AG04450 (cell line): ENCODE measurements at regions of chr6 and their contacts with region 1.

Region 1: DNA sequence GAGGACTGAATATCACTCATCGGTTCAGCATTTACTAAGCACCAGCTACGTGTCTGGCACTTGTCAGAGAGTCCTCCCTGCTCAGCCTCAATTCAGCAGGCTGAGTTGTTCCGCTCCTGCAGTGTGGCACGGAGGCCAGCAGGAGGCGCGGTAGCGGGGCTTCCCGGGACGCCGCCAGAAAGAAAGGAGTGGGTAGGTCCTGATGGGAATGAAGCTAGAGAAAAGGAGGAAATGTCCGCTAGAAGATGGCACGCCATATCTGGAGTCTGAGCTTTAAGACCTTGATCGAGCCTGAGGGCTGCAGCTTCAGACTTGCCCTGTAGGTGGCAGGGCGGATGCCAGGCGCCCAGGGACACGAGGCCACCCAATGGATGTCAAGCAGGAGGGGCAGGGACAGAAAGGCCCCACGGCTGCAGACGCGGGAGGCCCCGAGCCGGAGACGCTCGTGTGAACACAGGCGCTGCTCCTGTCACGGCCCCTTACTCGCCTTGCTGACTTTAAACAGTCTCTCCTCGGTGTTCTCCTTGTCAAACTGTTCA is 18.7 kb downstream of the SERPINB6 start:
- DNase-seq: peak; percentile 75
- H3K4me3 ChIP-seq: 0 out of 2 replicates have a peak overlapping the region, but pooled peaks have one; percentile 11
- H3K27ac ChIP-seq: peak overlapping the region; percentile 65
- H3K27me3 ChIP-seq: no peaks in the 10 kb centered on the region
- CTCF ChIP-seq: peak; percentile 99

Region 2: GRCh38 chr6:2296781-2297180 is 655.8 kb before region 1 on chr6:
- CTCF ChIA-PET with region 1: no interaction called
- POLR2A ChIA-PET with region 1: no interaction called
- DNase-seq: no peak
- H3K4me3 ChIP-seq: no peak overlapping the region
- H3K27ac ChIP-seq: no peak overlapping the region
- H3K27me3 ChIP-seq: no peaks in the 10 kb centered on the region
- CTCF ChIP-seq: no peak

Region 3: DNA sequence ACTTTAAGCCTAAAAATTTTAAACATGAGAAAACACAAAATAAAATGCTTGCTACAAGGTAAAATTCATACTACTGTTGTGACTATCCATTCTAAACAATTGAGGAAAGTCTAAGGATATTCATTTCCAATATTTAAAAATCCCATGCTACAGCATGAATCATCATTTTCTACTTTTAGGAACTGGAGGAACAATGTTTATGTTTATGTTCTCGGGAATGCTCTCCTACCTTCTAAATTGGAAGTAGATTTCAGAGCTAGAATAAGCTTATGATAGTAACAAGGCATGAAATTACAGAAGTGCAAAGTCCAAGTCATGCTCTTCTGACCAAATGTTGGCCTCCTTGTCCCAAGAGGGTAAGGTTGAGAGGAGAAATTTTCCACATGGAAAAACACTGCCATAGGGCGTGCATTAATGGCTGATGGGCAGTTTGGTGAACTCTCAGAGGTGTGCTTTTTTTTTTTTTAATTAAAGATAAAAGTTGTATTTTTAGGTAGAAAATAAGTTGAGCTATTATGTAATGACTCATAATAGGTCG is 195.9 kb before region 1 on chr6:
- CTCF ChIA-PET with region 1: interaction called, 11 read pairs
- POLR2A ChIA-PET with region 1: no interaction called
- DNase-seq: no peak
- H3K4me3 ChIP-seq: no peak overlapping the region
- H3K27ac ChIP-seq: peak overlapping the region; percentile 43
- H3K27me3 ChIP-seq: no peaks in the 10 kb centered on the region
- CTCF ChIP-seq: no peak

Region 4: DNA sequence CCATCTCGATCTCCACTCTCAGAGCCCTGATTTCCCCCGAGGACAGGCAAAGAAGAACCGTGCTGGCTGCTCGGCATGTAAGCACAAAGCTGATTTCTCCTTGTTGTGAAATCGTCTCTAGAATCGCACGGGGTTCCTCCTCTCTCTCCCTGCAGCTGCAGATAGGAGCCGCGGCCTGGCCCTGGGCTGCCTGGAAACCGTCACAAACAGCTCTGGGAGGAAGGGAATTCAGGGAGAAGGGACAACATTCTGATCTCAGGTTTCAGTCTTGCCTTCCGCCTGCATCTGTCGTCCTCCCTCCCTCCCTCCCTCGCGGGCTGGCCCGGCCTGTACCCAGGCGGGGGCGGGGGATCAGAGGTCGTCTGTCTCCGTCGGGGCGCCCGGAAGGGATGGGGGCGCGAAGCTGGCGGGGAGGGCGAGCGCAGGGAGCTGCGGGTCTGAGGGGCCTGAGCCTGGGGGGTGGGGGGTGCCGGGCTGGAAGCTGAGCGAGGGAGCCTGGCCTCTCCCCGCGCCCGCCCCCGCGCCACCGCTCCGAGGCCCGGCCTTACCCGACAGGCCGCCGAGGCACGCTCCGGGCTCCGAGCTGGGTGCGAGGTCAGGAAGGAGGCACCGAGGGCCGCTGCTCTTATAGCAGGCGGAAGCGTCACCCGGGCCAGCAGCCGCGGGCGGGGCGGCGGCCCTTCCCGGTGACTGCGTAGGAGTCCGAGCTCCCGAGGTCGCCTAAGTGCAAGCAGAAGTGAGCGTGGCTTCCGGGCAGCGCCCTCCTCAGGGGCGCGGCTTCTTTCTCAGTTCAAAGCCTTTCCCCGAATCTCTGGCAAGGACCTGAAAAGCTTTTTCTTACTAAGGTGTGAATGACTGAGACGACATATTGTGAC is 111.1 kb before region 1 on chr6 and contains the start of gene SERPINB1:
- CTCF ChIA-PET with region 1: interaction called, 24 read pairs
- POLR2A ChIA-PET with region 1: no interaction called
- DNase-seq: peak; percentile 91
- H3K4me3 ChIP-seq: peak within 1 kb of the TSS; percentile 60
- H3K27ac ChIP-seq: peak within 1 kb of the TSS; percentile 93
- H3K27me3 ChIP-seq: no peaks in the 10 kb centered on the region
- CTCF ChIP-seq: peak; percentile 20; the same call in 1 of the 2 replicates
- polyA plus RNA-seq, gene SERPINB1: 17.7 and 22.4 TPM in 2 replicates

Region 5: GRCh38 chr6:2877057-2877882 is 75.4 kb before region 1 on chr6:
- CTCF ChIA-PET with region 1: interaction called, 13 read pairs
- POLR2A ChIA-PET with region 1: no interaction called
- DNase-seq: no peak
- H3K4me3 ChIP-seq: no peak overlapping the region
- H3K27ac ChIP-seq: peak overlapping the region; percentile 81
- H3K27me3 ChIP-seq: peaks cover 10% of the 10 kb centered on the region
- CTCF ChIP-seq: no peak

Region 6: GRCh38 chr6:2931970-2932748 is 20.5 kb before region 1 on chr6:
- CTCF ChIA-PET with region 1: interaction called, 36 read pairs
- POLR2A ChIA-PET with region 1: no interaction called
- DNase-seq: peak; percentile 4
- H3K4me3 ChIP-seq: no peak overlapping the region
- H3K27ac ChIP-seq: no peak overlapping the region
- H3K27me3 ChIP-seq: peaks cover 7% of the 10 kb centered on the region
- CTCF ChIP-seq: peak; percentile 99

Region 7: DNA sequence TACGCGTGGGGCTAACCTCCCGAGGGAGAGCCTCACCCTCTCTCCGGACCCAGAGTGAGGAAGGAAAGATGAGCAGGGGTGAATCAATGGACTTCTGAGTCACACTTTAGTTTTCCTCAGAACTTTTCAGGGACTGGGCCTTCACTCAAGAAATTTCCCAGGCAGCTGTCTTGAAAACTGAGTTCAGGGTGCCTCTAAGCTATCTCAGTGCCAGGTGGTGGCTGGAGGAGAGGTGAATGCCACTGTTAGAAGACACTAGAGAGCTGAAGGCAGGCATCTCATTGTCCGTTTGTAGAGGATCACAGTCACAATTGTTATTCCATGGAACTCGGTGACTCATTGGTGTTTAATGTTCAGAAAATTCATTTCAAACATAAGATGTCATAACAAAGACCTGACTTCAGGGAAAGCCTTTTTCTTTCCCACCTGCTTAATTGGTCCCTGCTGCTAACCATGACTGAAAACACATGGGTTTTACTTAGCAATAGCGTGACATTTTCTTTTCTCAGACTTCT is 24.0 kb after region 1 on chr6:
- CTCF ChIA-PET with region 1: interaction called, 47 read pairs
- POLR2A ChIA-PET with region 1: interaction called, 8 read pairs
- DNase-seq: no peak
- H3K4me3 ChIP-seq: no peak overlapping the region
- H3K27ac ChIP-seq: peak overlapping the region; percentile 87
- H3K27me3 ChIP-seq: no peaks in the 10 kb centered on the region
- CTCF ChIP-seq: no peak

Region 8: DNA sequence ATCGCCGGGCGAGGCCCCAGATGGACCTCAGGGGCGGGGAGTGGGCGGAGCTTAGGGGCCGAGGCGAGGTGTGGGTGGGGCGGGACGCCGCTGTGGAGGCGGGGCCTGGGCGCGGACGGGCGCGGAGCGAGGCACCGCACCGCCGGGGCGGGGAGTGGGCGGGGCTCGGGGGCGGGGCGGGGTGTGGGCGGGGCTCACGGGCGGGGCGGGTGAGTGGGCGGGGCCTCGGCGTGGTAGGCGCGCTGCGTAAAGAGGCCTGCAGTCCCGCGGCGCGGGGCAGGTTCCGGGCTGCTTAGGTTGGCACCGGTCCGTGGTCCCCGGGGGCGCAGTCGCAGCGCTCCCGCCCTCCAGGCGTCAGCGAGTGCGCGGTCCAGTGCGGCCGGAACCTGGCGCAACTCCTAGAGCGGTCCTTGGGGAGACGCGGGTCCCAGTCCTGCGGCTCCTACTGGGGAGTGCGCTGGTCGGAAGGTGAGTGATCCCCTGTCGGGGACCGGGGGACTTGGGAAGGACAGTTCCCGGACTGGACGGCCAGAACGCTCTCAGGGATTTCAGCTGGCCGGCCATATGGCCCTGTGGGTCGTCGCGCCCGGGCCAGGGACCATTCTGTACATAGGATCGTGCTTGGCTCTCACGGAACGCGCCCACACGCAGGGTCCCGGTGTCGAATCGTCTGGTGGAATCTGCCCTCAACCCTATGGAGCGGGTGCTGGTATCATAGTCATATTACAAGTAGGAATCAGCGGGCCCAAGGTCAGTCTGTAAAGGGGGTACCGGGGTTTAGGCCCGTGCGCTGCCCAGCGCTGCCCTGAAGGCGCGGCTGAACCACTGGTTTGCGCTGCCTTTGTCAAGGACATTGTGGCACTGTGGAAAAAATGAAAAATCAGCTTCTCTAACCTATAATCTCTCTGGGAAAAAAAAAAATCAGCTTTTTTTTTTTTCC is 47.3 kb after region 1 on chr6 and contains the start of gene NQO2:
- CTCF ChIA-PET with region 1: interaction called, 11 read pairs
- POLR2A ChIA-PET with region 1: no interaction called
- DNase-seq: peak; percentile 34
- H3K4me3 ChIP-seq: peak within 1 kb of the TSS; percentile 87
- H3K27ac ChIP-seq: peak within 1 kb of the TSS; percentile 47
- H3K27me3 ChIP-seq: no peaks in the 10 kb centered on the region
- CTCF ChIP-seq: no peak
- polyA plus RNA-seq, gene NQO2: 32.4 and 34.3 TPM in 2 replicates

Region 9: DNA sequence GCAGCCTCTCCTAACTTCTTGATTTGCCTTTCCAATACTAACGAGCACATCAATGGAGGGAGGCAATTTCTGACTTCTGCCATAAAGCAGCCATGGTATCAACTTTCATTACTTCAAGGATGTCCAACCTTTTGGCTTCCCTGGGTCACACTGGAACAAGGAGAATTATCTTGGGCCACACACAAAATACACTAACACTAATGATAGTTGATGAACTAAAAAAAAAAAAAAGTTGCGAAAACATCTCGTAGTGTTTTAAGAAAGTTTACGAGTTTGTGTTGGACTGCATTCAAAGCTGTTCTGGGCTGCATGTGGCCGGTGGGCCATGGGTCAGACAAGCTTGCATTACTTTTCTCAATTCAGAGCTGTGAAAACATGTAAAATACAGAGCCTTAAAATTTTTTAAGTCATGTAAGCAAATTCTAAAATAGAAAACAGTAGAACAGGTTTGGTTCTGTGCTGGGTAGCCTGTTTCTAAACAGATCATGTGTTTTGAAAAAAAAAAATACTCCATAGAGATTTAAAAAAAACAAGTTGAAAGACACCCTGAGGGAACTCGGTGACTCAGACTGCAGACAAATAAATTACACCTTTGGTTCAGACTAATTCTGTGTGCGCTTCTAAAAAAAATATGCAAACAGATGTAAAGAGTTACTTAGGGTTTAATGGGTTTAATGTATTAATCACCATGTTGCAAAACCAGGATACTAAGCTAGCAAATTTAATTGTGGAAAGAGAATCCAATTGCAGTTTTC is 547.8 kb after region 1 on chr6:
- CTCF ChIA-PET with region 1: no interaction called
- POLR2A ChIA-PET with region 1: no interaction called
- DNase-seq: no peak
- H3K4me3 ChIP-seq: no peak overlapping the region
- H3K27ac ChIP-seq: no peak overlapping the region
- H3K27me3 ChIP-seq: peaks cover 23% of the 10 kb centered on the region
- CTCF ChIP-seq: no peak